Gastrocnemius medialis (tissue), 4 donors: ENCODE measurements at regions of chr1 and their contacts with region 1.

Region 1: GRCh38 chr1:56654126-56654923 is 9.2 kb downstream of the PRKAA2 start:
- DNase-seq: no peak
- ATAC-seq: peak; percentile 94 to 99
- H3K4me3 ChIP-seq: peak overlapping the region; percentile 12 to 38 (median 28)
- H3K27ac ChIP-seq: peak overlapping the region; percentile 87 to 94 (median 88)
- H3K4me1 ChIP-seq: peaks cover 24 to 56% of the 10 kb centered on the region in 2 donors
- H3K27me3 ChIP-seq: no peaks in the 10 kb centered on the region
- CTCF ChIP-seq: no peak
- POLR2A ChIP-seq: no peak

Region 2: DNA sequence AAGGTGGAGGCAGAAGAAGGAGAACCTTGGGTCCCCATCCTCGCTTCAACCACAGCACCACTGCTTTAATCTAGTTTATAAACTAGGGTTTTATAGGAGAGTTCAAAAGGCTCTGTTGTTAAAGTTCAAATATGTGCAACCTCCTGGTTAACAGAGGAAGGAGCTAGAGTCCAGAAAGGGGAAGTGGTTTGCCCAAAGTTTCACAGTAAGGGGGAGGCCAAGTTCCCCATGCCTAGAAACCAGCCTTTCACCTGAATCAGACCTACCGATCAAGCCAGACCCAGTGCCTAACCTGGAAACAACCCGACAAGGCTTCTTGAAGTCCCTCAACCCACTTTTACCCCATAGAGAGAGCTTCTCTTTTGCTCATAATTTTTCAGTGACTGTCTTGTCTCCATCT is 181.5 kb before region 1 on chr1:
- in situ Hi-C with region 1: no loop called
- intact Hi-C with region 1: no loop called
- DNase-seq: no peak
- ATAC-seq: no peak
- H3K4me3 ChIP-seq: no peak overlapping the region
- H3K27ac ChIP-seq: no peak overlapping the region
- H3K4me1 ChIP-seq: peaks cover 0 to 8% of the 10 kb centered on the region in 2 donors
- H3K27me3 ChIP-seq: no peaks in the 10 kb centered on the region
- CTCF ChIP-seq: no peak
- POLR2A ChIP-seq: no peak

Region 3: DNA sequence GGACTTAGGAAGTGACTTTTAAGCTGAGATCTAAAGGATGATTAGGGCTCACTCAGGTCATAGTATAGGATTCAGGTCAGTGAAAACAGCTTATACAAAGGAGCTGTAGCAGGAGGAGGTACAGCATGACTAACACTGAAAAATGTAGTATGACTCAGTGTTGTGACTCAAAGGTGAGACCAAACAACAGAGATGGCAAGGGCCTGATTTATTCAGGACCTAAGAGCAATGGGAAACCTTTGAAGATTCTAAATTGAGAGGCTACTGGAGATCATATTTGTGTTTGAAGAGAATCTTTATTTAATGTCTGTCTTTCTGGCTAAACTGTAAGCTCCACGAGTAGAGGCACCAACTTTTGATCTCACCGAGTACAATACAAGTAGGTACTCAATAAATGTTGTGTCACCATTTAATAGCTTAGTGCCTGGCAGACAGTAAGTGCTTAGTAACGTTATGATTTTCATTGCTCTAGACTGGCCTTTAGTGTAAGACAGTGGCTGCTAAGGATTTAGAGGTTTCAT is 34.2 kb after region 1 on chr1:
- in situ Hi-C with region 1: no loop called
- intact Hi-C with region 1: loop called (anchors 5 kb)
- DNase-seq: no peak
- ATAC-seq: peak; percentile 96 to 97
- H3K4me3 ChIP-seq: no peak overlapping the region
- H3K27ac ChIP-seq: peak overlapping the region; percentile 70 to 76 (median 74)
- H3K4me1 ChIP-seq: peaks cover 16 to 28% of the 10 kb centered on the region in 2 donors
- H3K27me3 ChIP-seq: no peaks in the 10 kb centered on the region
- CTCF ChIP-seq: no peak
- POLR2A ChIP-seq: no peak

Region 4: GRCh38 chr1:58183286-58183685 is 1529.0 kb after region 1 on chr1:
- in situ Hi-C with region 1: no loop called
- intact Hi-C with region 1: no loop called
- DNase-seq: no peak
- ATAC-seq: no peak
- H3K4me3 ChIP-seq: no peak overlapping the region
- H3K27ac ChIP-seq: no peak overlapping the region
- H3K4me1 ChIP-seq: no peaks in the 10 kb centered on the region
- H3K27me3 ChIP-seq: no peaks in the 10 kb centered on the region
- CTCF ChIP-seq: no peak
- POLR2A ChIP-seq: no peak